Activated CD8-positive, alpha-beta T cell treated with anti-CD3 and anti-CD28 coated beads for 36 hours (primary cell): ENCODE measurements at regions of chr1 and their contacts with region 1.

Region 1: DNA sequence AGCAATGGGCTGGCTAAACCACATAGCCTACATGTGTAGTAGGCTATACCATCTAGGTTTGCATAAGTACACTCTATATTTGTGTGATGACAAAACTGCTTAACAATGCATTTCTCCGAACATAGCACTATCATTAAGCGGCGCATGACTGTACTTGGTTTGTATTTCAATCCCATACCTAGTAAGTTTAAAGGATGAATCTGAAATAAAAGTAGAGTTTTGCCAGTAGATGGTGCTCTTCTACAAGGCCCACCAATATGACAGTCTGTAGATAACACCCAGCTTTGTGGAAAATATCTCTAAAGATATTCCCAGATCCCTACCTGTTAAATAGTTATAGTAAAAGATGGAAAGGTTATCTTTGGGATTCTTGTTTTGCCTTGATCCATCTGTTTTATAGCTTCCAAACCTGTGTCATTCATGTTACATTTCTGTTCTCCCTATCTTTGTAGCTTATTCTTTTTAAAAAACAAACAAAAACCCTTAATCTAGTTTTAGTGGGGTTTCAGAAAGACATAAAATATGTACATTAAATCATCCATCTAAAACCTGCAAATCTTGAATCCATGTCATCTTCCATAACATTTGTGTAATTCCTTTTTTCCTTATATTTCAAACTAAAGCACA is 33.9 kb upstream of the ASPM start:
- DNase-seq: no peak
- ATAC-seq: no peak
- H3K4me3 Mint-ChIP-seq: no peak overlapping the region
- H3K27ac Mint-ChIP-seq: no peak overlapping the region
- H3K4me1 Mint-ChIP-seq: peaks cover 7% of the 10 kb centered on the region
- H3K27me3 Mint-ChIP-seq: no peaks in the 10 kb centered on the region
- CTCF ChIP-seq: peak; percentile 83

Region 2: GRCh38 chr1:197027378-197027777 is 153.0 kb before region 1 on chr1:
- CTCF ChIA-PET with region 1: no interaction called
- POLR2A ChIA-PET with region 1: no interaction called
- intact Hi-C with region 1: no loop called
- DNase-seq: no peak
- ATAC-seq: no peak
- H3K4me3 Mint-ChIP-seq: no peak overlapping the region
- H3K27ac Mint-ChIP-seq: no peak overlapping the region
- H3K4me1 Mint-ChIP-seq: no peaks in the 10 kb centered on the region
- H3K27me3 Mint-ChIP-seq: no peaks in the 10 kb centered on the region
- CTCF ChIP-seq: no peak

Region 3: DNA sequence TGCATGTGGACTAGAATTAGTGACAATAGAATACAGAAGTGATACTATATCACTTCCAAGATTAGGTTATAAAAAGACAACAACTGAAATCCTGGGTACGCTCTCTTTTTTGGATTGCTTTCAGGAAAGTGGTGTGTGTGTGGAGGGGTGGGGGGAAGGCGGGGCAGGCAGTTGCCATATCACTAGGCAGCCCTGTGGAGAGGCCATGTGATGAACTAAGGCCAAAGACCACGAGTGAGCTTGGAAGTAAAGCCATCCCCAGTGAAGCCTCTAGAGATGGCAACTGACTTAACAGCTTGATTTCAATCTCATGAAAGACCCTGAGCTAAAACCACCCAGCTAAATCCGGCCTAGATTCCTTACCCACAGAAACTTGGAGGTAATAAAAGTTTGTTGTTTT is 27.7 kb before region 1 on chr1:
- CTCF ChIA-PET with region 1: interaction called, 10 read pairs
- POLR2A ChIA-PET with region 1: no interaction called
- intact Hi-C with region 1: no loop called
- DNase-seq: no peak
- ATAC-seq: no peak
- H3K4me3 Mint-ChIP-seq: no peak overlapping the region
- H3K27ac Mint-ChIP-seq: no peak overlapping the region
- H3K4me1 Mint-ChIP-seq: no peaks in the 10 kb centered on the region
- H3K27me3 Mint-ChIP-seq: no peaks in the 10 kb centered on the region
- CTCF ChIP-seq: no peak

Region 4: GRCh38 chr1:197159461-197159860 is 20.9 kb before region 1 on chr1:
- CTCF ChIA-PET with region 1: interaction called, 10 read pairs
- POLR2A ChIA-PET with region 1: no interaction called
- intact Hi-C with region 1: no loop called
- DNase-seq: no peak
- ATAC-seq: no peak
- H3K4me3 Mint-ChIP-seq: no peak overlapping the region
- H3K27ac Mint-ChIP-seq: no peak overlapping the region
- H3K4me1 Mint-ChIP-seq: no peaks in the 10 kb centered on the region
- H3K27me3 Mint-ChIP-seq: no peaks in the 10 kb centered on the region
- CTCF ChIP-seq: no peak

Region 5: GRCh38 chr1:197252973-197253372 is 72.6 kb after region 1 on chr1:
- CTCF ChIA-PET with region 1: no interaction called
- POLR2A ChIA-PET with region 1: no interaction called
- intact Hi-C with region 1: no loop called
- DNase-seq: no peak
- ATAC-seq: no peak
- H3K4me3 Mint-ChIP-seq: no peak overlapping the region
- H3K27ac Mint-ChIP-seq: no peak overlapping the region
- H3K4me1 Mint-ChIP-seq: no peaks in the 10 kb centered on the region
- H3K27me3 Mint-ChIP-seq: no peaks in the 10 kb centered on the region
- CTCF ChIP-seq: no peak

Region 6: GRCh38 chr1:197327776-197328364 is 147.5 kb after region 1 on chr1:
- CTCF ChIA-PET with region 1: interaction called, 5 read pairs
- POLR2A ChIA-PET with region 1: no interaction called
- intact Hi-C with region 1: loop called (anchors 10 kb)
- DNase-seq: no peak
- ATAC-seq: no peak
- H3K4me3 Mint-ChIP-seq: no peak overlapping the region
- H3K27ac Mint-ChIP-seq: no peak overlapping the region
- H3K4me1 Mint-ChIP-seq: no peaks in the 10 kb centered on the region
- H3K27me3 Mint-ChIP-seq: no peaks in the 10 kb centered on the region
- CTCF ChIP-seq: peak; percentile 68

Region 7: DNA sequence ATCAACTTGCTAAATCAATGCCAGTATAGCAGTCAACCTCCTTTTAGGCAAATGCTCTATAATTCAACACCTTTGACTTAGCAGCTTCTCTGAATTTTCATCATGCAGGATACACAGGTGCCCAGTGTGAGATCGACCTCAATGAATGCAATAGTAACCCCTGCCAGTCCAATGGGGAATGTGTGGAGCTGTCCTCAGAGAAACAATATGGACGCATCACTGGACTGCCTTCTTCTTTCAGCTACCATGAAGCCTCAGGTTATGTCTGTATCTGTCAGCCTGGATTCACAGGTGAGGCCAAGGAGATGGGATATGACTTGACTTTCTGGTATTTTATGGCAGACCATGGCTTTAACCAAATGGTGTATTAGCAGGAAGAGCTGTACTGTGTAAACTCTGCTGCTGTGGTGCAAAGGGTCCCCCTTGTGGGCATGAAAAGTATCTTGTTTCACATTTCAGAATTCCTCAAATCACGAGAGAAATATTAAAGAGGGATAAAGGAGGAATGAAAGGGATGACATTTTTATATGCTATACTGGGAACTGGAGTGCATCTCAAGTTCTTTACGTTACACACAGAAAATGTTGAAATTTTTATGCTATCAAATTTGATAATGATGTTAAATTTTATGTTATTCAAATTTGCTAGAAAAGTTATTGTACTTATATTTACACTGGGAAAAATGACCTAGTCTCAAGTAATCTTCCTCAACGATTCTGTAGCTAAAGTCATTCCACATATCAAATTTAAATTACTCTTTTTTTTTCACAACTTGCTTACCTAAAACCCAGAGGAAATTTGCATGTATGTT is 176.6 kb after region 1 on chr1:
- CTCF ChIA-PET with region 1: interaction called, 35 read pairs
- POLR2A ChIA-PET with region 1: no interaction called
- intact Hi-C with region 1: no loop called
- DNase-seq: peak; percentile 26
- ATAC-seq: peak; percentile 71
- H3K4me3 Mint-ChIP-seq: no peak overlapping the region
- H3K27ac Mint-ChIP-seq: no peak overlapping the region
- H3K4me1 Mint-ChIP-seq: no peaks in the 10 kb centered on the region
- H3K27me3 Mint-ChIP-seq: no peaks in the 10 kb centered on the region
- CTCF ChIP-seq: peak; percentile 76